HEK293T (cell line): ENCODE measurements at regions of chr20 and their contacts with region 1.

Region 1: DNA sequence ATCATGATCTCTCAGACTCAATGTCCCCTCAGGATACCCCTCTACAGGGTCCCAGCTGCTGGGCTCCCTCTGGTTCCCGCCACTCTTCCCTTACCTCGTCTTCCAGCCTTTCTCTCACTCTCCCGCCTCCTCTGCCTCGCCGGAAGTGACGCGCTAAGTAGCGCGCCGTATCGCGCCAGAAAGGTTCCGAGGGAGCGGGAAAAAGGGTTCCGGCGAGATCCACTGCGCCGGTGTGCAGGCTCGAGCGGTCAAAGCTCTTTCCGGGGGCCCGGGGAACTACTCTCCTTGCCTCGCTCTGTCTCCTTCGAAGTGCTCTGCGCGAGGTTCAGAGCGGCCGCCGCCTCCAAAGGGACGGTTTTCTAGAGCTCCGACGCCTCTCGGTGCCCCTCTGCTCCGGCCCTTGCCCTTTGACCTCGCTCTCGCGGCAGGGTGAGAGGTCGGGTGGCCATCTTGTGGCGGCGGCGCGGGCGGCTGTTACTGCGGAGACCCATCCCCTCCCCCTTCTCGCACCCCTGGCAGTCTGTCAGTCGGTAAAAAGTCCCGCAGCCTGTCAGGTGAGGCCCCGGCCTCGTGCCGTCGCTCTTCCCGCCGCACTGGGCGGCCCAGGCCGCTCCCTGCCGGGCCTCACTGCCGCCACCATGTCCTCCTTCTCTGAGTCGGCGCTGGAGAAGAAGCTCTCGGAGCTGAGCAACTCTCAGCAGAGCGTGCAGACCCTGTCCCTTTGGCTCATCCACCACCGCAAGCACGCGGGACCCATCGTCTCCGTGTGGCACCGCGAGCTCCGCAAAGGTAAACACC is at the starts of genes RPRD1B and TTI1:
- DNase-seq: peak; percentile 89

Region 2: GRCh38 chr20:38043512-38044300 is 10.2 kb after region 1 on chr20:
- CTCF ChIA-PET with region 1: interaction called, 8 read pairs
- POLR2A ChIA-PET with region 1: interaction called, 15 read pairs
- DNase-seq: no peak